Endothelial cell of umbilical vein (primary cell): ENCODE measurements at regions of chr7 and their contacts with region 1.

Region 1: GRCh38 chr7:150466477-150466876 is 16.0 kb downstream of the GIMAP8 start:
- DNase-seq: peak; percentile 93
- H3K4me3 ChIP-seq: peak overlapping the region in 2 of 3 experiments; percentile 30 to 77
- H3K27ac ChIP-seq: peak overlapping the region; percentile 53
- H3K4me1 ChIP-seq: peaks cover 22% of the 10 kb centered on the region
- H3K27me3 ChIP-seq: no peaks in the 10 kb centered on the region
- CTCF ChIP-seq: no peak
- POLR2A ChIP-seq: no peak

Region 2: DNA sequence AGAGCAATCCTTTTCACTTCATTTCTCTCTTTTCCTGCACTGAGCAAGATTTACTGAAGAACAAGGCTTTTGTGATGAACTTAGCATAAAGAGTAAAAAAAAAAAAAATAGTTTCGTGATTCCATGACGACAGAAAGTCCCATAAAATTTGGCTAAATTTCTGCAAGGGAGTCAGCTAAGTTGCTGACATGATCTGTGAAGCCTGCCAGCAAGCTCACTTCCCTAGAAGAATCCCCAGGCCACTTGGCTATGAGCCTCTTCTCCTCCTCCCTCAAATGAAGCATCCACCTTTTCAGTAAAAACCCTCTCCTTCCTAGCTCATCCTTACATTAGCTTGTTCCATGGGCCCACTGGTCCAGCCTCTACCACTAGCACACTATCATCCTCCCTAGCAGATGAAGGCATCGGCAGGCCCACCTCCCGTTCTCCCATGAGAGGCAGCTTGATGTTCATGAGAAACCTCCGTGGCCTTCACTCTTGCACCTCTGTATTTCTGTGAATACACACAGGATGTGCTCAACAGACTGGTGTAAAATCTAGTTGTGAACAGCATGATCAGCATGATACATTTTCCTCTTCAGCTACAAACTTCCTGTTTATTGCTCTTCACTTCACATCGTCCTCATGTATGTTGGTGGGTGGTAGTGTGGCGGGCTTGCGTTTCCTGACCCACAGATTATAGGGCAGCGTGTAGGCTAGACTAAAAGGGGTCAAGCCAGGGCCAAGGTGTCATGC is 14.9 kb after region 1 on chr7:
- CTCF ChIA-PET with region 1: interaction called, 4 read pairs
- POLR2A ChIA-PET with region 1: interaction called, 4 read pairs
- dilution Hi-C with region 1: no loop called
- intact Hi-C with region 1: loop called (anchors 1 kb)
- DNase-seq: no peak
- H3K4me3 ChIP-seq: no peak overlapping the region
- H3K27ac ChIP-seq: no peak overlapping the region
- H3K4me1 ChIP-seq: peaks cover 15% of the 10 kb centered on the region
- H3K27me3 ChIP-seq: no peaks in the 10 kb centered on the region
- CTCF ChIP-seq: no peak
- POLR2A ChIP-seq: no peak

Region 3: GRCh38 chr7:150567169-150567568 is 100.7 kb after region 1 on chr7 and contains the start of gene GIMAP4:
- CTCF ChIA-PET with region 1: no interaction called
- POLR2A ChIA-PET with region 1: interaction called, 3 read pairs
- dilution Hi-C with region 1: no loop called
- intact Hi-C with region 1: loop called (anchors 5 kb)
- DNase-seq: peak; percentile 69
- H3K4me3 ChIP-seq: peak within 1 kb of the TSS; percentile 78 to 80 (median 79)
- H3K27ac ChIP-seq: peak within 1 kb of the TSS; percentile 63
- H3K4me1 ChIP-seq: peaks cover 62% of the 10 kb centered on the region
- H3K27me3 ChIP-seq: no peaks in the 10 kb centered on the region
- CTCF ChIP-seq: no peak
- POLR2A ChIP-seq: peak; percentile 49
- total RNA-seq, gene GIMAP4: 168 and 174 TPM in 2 replicates

Region 4: DNA sequence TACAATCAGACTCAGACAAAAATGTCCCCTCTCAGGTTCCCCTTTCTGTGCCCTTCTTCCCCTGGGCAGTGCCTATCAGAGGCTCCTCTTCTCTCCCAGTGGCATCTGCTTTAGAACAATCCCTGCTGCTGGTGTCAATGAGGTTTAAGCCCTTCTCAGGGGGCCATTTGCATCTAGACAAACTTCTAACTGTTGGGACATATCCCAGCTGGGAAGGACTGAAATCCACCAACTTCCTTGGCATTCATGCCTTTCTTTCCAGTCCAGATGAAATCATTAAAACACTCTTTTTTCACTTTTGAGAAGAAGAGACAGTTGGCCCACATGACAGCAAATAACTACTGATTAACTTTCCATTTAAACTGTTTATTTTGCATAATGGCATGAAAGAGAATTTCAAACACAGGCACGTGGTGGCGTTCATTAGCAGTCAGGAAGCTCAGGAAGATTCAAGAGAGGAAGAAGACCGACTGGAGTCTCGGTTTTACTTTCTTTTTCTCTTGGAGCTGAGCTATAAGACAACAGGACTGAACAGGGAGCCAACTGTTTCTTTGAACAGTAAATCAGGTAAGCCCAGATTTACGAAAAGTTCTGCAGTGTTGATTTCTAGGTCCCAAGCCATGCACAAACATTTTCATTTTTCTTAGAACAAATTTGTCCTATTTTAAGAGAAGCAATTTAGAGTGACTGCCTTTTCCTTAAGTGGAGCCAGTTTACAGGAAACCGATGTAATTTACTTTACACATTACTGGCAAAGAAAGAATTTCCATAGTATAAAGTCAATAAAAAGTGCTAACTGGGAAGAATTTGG is 218.9 kb after region 1 on chr7 and contains the start of gene GIMAP2:
- CTCF ChIA-PET with region 1: no interaction called
- POLR2A ChIA-PET with region 1: no interaction called
- dilution Hi-C with region 1: no loop called
- intact Hi-C with region 1: loop called (anchors 5 kb)
- DNase-seq: peak; percentile 87
- H3K4me3 ChIP-seq: peak within 1 kb of the TSS; percentile 22 to 93 (median 90)
- H3K27ac ChIP-seq: peak within 1 kb of the TSS; percentile 83
- H3K4me1 ChIP-seq: peaks cover 15% of the 10 kb centered on the region
- H3K27me3 ChIP-seq: no peaks in the 10 kb centered on the region
- CTCF ChIP-seq: no peak
- POLR2A ChIP-seq: no peak
- total RNA-seq, gene GIMAP2: 26.2 and 27.9 TPM in 2 replicates